Transverse colon (tissue), 4 donors: ENCODE measurements at regions of chr10 and their contacts with region 1.

Region 1: DNA sequence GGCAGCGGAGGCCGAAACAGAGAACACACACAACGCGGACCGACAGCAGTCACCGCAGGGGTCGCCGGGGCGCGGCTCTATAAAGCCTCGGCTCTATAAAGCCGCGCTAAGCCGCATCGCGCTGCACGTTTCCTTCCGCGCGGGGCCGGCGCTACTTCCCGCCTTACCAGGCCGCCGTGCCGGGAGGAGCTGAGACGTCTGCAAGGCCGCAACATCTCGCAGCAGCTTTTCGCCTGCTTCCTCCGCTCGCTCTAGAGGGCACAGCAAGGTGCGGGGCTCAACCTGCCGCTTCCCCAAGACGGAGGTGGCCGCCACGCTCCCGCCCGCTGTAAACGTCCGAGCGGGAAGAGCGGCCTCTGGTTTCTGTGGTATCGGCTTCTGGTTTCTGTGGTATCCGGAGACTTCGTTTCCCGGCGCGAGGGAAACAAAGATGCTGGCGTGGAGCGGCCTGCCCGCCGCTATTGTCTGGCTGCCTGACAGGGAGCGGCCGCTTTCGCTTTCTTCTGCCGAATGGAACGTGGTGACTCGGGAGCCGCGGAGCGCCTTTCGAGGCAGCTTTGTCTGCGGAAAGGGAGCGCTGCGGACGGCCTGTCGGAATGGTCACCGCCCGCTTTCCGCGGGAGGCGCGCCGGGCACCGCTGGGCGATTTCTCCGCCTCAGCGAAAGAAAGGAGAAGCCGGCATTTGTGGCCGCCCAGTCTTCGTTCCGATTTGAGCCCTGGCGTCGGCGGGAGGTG is 91.8 kb downstream of the SPAG6 start:
- DNase-seq: peak; percentile 91
- H3K4me3 ChIP-seq: peak overlapping the region; percentile 61 to 88 (median 81)
- H3K27ac ChIP-seq: peak overlapping the region; percentile 92 to 98 (median 97)
- H3K4me1 ChIP-seq: peaks cover 9 to 22% (median 15%) of the 10 kb centered on the region in 4 donors
- H3K27me3 ChIP-seq: peaks cover 4% of the 10 kb centered on the region
- CTCF ChIP-seq: peak in 4 of 5 experiments; percentile 15 to 30 (median 20)
- EP300 ChIP-seq: no peak
- POLR2A ChIP-seq: peak; percentile 92

Region 2: DNA sequence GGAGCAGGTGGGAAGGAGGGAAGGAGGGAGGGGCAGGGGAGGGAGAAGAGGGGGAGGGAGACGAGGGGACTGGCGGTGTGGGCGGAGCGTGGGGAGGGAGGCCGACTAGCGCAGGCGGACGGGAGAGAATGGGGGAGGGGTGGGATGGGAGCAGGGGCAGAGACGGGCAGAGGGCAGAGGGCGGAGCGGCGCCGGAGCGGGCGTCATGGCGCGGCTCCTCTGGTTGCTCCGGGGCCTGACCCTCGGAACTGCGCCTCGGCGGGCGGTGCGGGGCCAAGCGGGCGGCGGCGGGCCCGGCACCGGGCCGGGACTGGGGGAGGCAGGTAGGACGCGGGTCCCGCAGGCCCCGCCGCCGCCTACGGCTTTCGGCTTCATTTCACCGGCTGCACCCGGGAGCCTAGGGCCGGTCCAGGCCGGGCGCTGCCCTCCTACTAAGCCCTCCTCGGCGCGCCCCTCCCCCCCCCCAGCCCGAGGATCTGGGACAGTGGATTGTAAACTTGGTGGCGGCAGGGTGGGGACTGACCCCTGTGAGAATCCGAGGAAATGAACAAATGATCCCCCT is 658.4 kb after region 1 on chr10 and contains the start of gene MSRB2:
- in situ Hi-C with region 1: no loop called
- intact Hi-C with region 1: loop called (anchors 10 kb)
- DNase-seq: peak; percentile 95
- H3K4me3 ChIP-seq: peak within 1 kb of the TSS; percentile 66 to 92 (median 78)
- H3K27ac ChIP-seq: peak within 1 kb of the TSS; percentile 95 to 97 (median 96)
- H3K4me1 ChIP-seq: peaks cover 0 to 38% (median 16%) of the 10 kb centered on the region in 4 donors
- H3K27me3 ChIP-seq: no peaks in the 10 kb centered on the region
- CTCF ChIP-seq: no peak
- EP300 ChIP-seq: no peak
- POLR2A ChIP-seq: peak; percentile 82
- total RNA-seq, gene MSRB2: 7.5 to 29.1 (median 19.2) TPM